ENCODE measurements at regions of chr7 and their contacts with region 1.

Region 1: GRCh38 chr7:112495810-112496462 is 15.1 kb downstream of the LSMEM1 start:
- DNase-seq: peak; percentile 64 to 77 (median 70)
- H3K4me3 ChIP-seq: no peak overlapping the region
- H3K27ac ChIP-seq: no peak overlapping the region
- H3K4me1 ChIP-seq: no peaks in the 10 kb centered on the region
- H3K27me3 ChIP-seq: no peaks in the 10 kb centered on the region

Region 2: GRCh38 chr7:111741811-111742240 is 754.1 kb before region 1 on chr7:
- CTCF ChIA-PET with region 1: interaction called, 16 read pairs
- POLR2A ChIA-PET with region 1: interaction called, 3 read pairs
- DNase-seq: peak; percentile 70 to 79 (median 75)
- H3K4me3 ChIP-seq: no peak overlapping the region
- H3K27ac ChIP-seq: no peak overlapping the region
- H3K4me1 ChIP-seq: peaks cover 0 to 5% (median 0%) of the 10 kb centered on the region in 4 experiments
- H3K27me3 ChIP-seq: no peaks in the 10 kb centered on the region

Region 3: GRCh38 chr7:111752022-111752582 is 743.8 kb before region 1 on chr7:
- CTCF ChIA-PET with region 1: interaction called, 17 read pairs
- POLR2A ChIA-PET with region 1: interaction called, 3 read pairs
- DNase-seq: peak; percentile 53 to 75 (median 69)
- H3K4me3 ChIP-seq: no peak overlapping the region
- H3K27ac ChIP-seq: no peak overlapping the region
- H3K4me1 ChIP-seq: no peaks in the 10 kb centered on the region
- H3K27me3 ChIP-seq: no peaks in the 10 kb centered on the region

Region 4: GRCh38 chr7:111763221-111763801 is 732.6 kb before region 1 on chr7:
- CTCF ChIA-PET with region 1: interaction called, 33 read pairs
- POLR2A ChIA-PET with region 1: no interaction called
- DNase-seq: peak; percentile 53 to 76 (median 72)
- H3K4me3 ChIP-seq: no peak overlapping the region
- H3K27ac ChIP-seq: no peak overlapping the region
- H3K4me1 ChIP-seq: no peaks in the 10 kb centered on the region
- H3K27me3 ChIP-seq: no peaks in the 10 kb centered on the region

Region 5: GRCh38 chr7:111855161-111855856 is 640.6 kb before region 1 on chr7:
- CTCF ChIA-PET with region 1: interaction called, 11 read pairs
- POLR2A ChIA-PET with region 1: no interaction called
- DNase-seq: peak; percentile 52 to 73 (median 69)
- H3K4me3 ChIP-seq: no peak overlapping the region
- H3K27ac ChIP-seq: no peak overlapping the region
- H3K4me1 ChIP-seq: peaks cover 0 to 3% (median 0%) of the 10 kb centered on the region in 4 experiments
- H3K27me3 ChIP-seq: no peaks in the 10 kb centered on the region

Region 6: GRCh38 chr7:111953611-111954010 is 542.3 kb before region 1 on chr7:
- CTCF ChIA-PET with region 1: no interaction called
- POLR2A ChIA-PET with region 1: no interaction called
- DNase-seq: peak; percentile 16 to 37 (median 36)
- H3K4me3 ChIP-seq: no peak overlapping the region
- H3K27ac ChIP-seq: no peak overlapping the region
- H3K4me1 ChIP-seq: no peaks in the 10 kb centered on the region
- H3K27me3 ChIP-seq: no peaks in the 10 kb centered on the region

Region 7: GRCh38 chr7:112211348-112211907 is 284.5 kb before region 1 on chr7:
- CTCF ChIA-PET with region 1: no interaction called
- POLR2A ChIA-PET with region 1: no interaction called
- DNase-seq: no peak
- H3K4me3 ChIP-seq: no peak overlapping the region
- H3K27ac ChIP-seq: no peak overlapping the region
- H3K4me1 ChIP-seq: peaks cover 5 to 8% (median 6%) of the 10 kb centered on the region in 4 experiments
- H3K27me3 ChIP-seq: no peaks in the 10 kb centered on the region

Region 8: GRCh38 chr7:112398534-112398933 is 97.4 kb before region 1 on chr7:
- CTCF ChIA-PET with region 1: no interaction called
- POLR2A ChIA-PET with region 1: no interaction called
- DNase-seq: peak in 2 of 3 donors; percentile 75 to 84
- H3K4me3 ChIP-seq: peak overlapping the region in 2 of 7 experiments; percentile 4 to 6
- H3K27ac ChIP-seq: no peak overlapping the region
- H3K4me1 ChIP-seq: peaks cover 12 to 21% (median 15%) of the 10 kb centered on the region in 4 experiments
- H3K27me3 ChIP-seq: no peaks in the 10 kb centered on the region

Region 9: DNA sequence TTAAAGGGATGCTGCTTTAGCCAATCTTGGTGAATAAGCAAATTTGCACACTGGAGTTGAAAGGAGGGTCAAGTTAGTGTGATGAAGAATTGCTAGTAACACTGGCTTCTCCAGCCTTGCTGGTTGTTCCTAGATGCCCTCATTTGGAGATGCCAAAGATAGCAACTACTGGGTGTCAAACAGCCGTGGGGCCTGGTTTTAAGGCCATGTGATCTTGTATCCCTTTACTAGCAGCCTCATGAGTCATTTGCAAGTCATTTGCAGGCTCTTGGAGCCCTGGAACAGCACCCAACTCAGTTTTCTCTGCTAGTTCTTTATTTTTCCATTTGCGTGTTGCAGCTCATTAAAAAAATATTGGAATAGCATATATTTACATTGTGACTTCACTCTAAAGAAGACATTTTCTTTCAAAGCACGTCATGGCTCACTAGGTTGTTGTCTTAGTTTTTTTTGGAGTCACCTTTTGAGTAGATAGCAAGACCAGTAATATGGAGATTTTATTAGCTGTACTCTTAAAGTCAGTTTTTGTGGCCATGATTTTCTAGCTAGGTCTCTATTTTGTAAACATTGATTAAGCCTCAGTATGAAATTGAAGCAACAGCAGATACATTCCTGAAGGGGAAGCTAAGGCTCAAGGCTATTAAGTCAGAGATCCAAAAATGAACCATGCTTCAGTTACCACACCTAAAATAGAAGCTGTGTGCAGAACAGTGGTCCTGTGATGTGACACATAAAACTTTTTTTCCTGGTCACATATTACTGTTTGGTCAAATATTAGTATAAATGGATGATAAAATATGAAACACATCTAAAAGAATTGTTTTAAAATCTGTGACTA is 13.9 kb before region 1 on chr7:
- CTCF ChIA-PET with region 1: interaction called, 32 read pairs
- POLR2A ChIA-PET with region 1: no interaction called
- DNase-seq: peak in 1 of 3 donors; percentile 22
- H3K4me3 ChIP-seq: no peak overlapping the region
- H3K27ac ChIP-seq: no peak overlapping the region
- H3K4me1 ChIP-seq: peaks cover 0 to 4% (median 0%) of the 10 kb centered on the region in 4 experiments
- H3K27me3 ChIP-seq: no peaks in the 10 kb centered on the region